CD8-positive, alpha-beta T cell (primary cell): ENCODE measurements at regions of chr7 and their contacts with region 1.

Region 1: DNA sequence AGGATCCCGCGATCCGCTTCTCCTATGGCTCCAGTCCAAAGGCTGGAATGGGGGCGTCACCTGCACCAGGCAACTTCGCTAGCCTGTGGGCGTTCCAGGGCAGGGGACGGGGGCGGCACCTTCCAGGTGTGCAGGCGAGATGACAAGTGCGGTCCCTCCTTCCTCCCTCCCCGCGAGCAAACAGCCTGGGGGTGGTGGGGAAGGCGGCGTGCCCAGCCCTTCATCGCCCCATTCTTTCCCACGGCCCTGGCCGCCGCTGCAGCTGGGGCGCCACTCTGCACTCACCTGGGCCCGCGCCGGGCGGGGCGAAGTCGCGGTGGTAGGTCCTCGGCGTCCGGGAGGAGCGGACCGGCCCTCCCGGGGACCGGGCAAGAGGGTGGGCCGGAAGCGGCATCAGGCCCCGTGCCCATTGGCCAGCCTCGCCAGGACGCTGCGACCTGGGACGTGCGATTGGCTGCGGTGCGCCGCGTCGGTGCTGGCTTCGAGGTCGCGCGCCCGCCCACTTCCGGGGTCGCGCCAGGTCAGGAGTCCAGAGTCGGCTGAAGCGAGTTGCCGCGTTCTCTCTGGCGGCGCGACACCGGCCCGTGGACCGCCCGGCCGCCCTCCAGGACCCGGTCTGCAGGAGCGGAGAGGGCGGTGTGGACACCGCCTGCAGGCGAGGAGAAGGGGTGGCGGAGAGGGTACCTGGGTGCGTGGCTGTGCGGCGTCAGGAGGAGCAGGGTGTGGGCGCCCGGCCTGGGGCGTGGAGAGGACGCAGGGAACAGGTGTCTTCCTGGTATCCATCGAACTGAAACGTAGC is at the start of gene TECPR1:
- DNase-seq: peak; percentile 66 to 94 (median 87)
- ATAC-seq: peak; percentile 68
- H3K4me3 ChIP-seq: peak within 1 kb of the TSS; percentile 78 to 86
- H3K4me3 Mint-ChIP-seq: peak within 1 kb of the TSS; percentile 94
- H3K27ac ChIP-seq: peak within 1 kb of the TSS; percentile 84 to 87
- H3K27ac Mint-ChIP-seq: peak within 1 kb of the TSS; percentile 99
- H3K4me1 ChIP-seq: peaks cover 47% of the 10 kb centered on the region
- H3K4me1 Mint-ChIP-seq: peaks cover 54% of the 10 kb centered on the region
- H3K27me3 ChIP-seq: no peaks in the 10 kb centered on the region
- H3K27me3 Mint-ChIP-seq: no peaks in the 10 kb centered on the region
- CTCF ChIP-seq: peak; percentile 22
- total RNA-seq, gene TECPR1: 64.4 to 68.2 TPM

Region 2: GRCh38 chr7:97381815-97382554 is 870.1 kb before region 1 on chr7:
- CTCF ChIA-PET with region 1: no interaction called
- POLR2A ChIA-PET with region 1: no interaction called
- intact Hi-C with region 1: no loop called
- DNase-seq: no peak
- ATAC-seq: no peak
- H3K4me3 ChIP-seq: no peak overlapping the region
- H3K4me3 Mint-ChIP-seq: no peak overlapping the region
- H3K27ac ChIP-seq: no peak overlapping the region
- H3K27ac Mint-ChIP-seq: no peak overlapping the region
- H3K4me1 ChIP-seq: no peaks in the 10 kb centered on the region
- H3K4me1 Mint-ChIP-seq: no peaks in the 10 kb centered on the region
- H3K27me3 ChIP-seq: no peaks in the 10 kb centered on the region
- H3K27me3 Mint-ChIP-seq: no peaks in the 10 kb centered on the region
- CTCF ChIP-seq: no peak

Region 3: DNA sequence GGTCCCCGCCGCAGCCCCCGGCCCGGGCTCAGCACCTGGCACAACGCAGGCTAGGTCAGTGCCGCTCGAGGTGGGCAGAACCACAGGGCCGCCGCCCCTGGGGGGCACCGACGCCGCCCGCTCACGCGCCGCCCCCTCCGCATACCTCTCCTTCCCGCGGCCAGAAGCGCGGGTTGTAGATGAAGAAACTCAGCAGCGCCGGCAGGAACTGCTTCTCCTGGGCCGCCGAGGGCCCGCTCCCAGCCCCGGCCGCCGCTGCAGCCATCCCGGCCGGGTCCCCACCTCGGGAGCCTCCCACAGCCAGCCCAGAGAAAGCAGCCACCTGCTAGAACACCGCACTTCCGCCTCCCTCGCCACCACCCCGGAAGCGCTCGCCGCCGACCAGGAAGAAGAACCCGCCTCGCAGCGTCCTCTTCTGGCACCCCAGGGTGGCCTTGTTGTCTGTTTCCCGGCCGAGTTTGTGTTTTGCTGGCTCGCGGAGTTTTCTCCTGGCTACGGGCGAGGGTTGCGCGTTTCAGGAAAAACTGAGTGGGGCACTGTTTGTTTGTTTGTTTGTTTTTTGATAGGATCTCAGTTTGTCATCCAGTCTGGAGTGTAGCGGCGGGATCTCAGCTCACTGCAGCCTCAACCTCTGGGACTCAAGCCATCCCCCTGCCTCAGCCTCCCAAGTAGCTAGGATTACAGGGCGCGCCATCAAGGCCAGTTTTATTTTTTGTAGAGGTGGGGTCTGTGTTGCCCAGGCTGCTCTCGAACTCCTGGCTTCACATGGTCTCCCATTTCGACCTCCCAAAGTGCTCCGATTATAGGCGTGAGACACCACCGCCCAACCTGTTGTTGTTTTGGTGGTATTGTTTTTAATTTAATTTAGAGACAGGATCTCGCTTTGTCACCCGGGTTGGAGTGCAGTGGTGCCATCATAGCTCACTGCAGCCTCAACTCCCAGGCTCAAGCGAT is 279.8 kb before region 1 on chr7:
- CTCF ChIA-PET with region 1: no interaction called
- POLR2A ChIA-PET with region 1: no interaction called
- intact Hi-C with region 1: loop called in 1 of 2 experiments (anchors 10 kb)
- DNase-seq: peak; percentile 65 to 90 (median 84)
- ATAC-seq: peak; percentile 94
- H3K4me3 ChIP-seq: peak overlapping the region; percentile 81 to 84
- H3K4me3 Mint-ChIP-seq: peak overlapping the region; percentile 89
- H3K27ac ChIP-seq: peak overlapping the region; percentile 61 to 72
- H3K27ac Mint-ChIP-seq: peak overlapping the region; percentile 93
- H3K4me1 ChIP-seq: peaks cover 10% of the 10 kb centered on the region
- H3K4me1 Mint-ChIP-seq: peaks cover 22% of the 10 kb centered on the region
- H3K27me3 ChIP-seq: no peaks in the 10 kb centered on the region
- H3K27me3 Mint-ChIP-seq: no peaks in the 10 kb centered on the region
- CTCF ChIP-seq: peak; percentile 32

Region 4: DNA sequence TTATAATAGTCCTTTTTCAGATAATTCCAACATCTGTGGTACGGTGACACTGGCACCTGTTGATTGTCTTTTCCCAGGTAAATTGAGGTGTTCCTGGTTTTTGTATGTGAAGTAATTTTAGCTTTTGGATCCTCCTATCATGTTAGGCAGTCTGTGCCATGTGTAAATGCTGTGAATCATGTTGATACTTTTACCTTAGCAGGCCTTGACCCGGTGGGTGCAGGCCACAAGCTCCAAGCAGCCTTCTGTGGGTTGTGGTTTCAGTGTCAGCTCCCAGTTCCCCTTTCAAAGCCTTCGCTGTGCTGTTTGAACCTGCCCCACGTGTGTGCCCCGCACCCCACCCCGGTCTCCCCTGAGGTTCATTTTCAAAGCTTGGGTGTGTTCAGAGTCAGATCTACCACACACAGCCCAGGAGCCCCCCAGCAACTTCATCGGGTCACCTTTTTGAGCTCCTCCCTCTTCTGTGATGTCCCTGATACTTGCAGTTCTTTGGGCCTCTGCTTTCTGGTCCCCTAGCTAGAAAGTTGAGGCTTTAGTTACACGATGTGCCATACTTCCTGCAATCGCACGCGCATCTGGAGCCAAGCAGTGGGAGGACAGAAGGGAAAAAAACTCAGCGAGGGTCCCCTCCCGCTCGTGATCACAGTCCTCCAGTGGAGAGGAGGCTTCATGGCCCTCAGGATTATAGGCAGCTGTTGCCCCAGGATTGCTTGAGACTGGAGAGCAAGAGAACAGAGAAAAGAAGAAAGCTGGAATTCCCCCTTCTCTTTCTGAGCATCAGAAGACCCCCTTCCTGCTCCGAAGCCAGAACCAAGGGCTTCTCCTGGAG is 49.5 kb before region 1 on chr7:
- CTCF ChIA-PET with region 1: no interaction called
- POLR2A ChIA-PET with region 1: interaction called, 23 read pairs
- intact Hi-C with region 1: loop called in 1 of 2 experiments (anchors 2 kb)
- DNase-seq: peak; percentile 44 to 86 (median 73)
- ATAC-seq: peak; percentile 85
- H3K4me3 ChIP-seq: peak overlapping the region; percentile 30 to 43
- H3K4me3 Mint-ChIP-seq: peak overlapping the region; percentile 85
- H3K27ac ChIP-seq: peak overlapping the region; percentile 50
- H3K27ac Mint-ChIP-seq: peak overlapping the region; percentile 93
- H3K4me1 ChIP-seq: peaks cover 58% of the 10 kb centered on the region
- H3K4me1 Mint-ChIP-seq: peaks cover 60% of the 10 kb centered on the region
- H3K27me3 ChIP-seq: no peaks in the 10 kb centered on the region
- H3K27me3 Mint-ChIP-seq: no peaks in the 10 kb centered on the region
- CTCF ChIP-seq: no peak

Region 5: GRCh38 chr7:98314469-98314868 is 62.4 kb after region 1 on chr7:
- CTCF ChIA-PET with region 1: no interaction called
- POLR2A ChIA-PET with region 1: no interaction called
- intact Hi-C with region 1: no loop called
- DNase-seq: peak in 1 of 9 experiments; percentile 19
- ATAC-seq: no peak
- H3K4me3 ChIP-seq: no peak overlapping the region
- H3K4me3 Mint-ChIP-seq: no peak overlapping the region
- H3K27ac ChIP-seq: no peak overlapping the region
- H3K27ac Mint-ChIP-seq: no peak overlapping the region
- H3K4me1 ChIP-seq: no peaks in the 10 kb centered on the region
- H3K4me1 Mint-ChIP-seq: no peaks in the 10 kb centered on the region
- H3K27me3 ChIP-seq: no peaks in the 10 kb centered on the region
- H3K27me3 Mint-ChIP-seq: peaks cover 4% of the 10 kb centered on the region
- CTCF ChIP-seq: no peak

Region 6: DNA sequence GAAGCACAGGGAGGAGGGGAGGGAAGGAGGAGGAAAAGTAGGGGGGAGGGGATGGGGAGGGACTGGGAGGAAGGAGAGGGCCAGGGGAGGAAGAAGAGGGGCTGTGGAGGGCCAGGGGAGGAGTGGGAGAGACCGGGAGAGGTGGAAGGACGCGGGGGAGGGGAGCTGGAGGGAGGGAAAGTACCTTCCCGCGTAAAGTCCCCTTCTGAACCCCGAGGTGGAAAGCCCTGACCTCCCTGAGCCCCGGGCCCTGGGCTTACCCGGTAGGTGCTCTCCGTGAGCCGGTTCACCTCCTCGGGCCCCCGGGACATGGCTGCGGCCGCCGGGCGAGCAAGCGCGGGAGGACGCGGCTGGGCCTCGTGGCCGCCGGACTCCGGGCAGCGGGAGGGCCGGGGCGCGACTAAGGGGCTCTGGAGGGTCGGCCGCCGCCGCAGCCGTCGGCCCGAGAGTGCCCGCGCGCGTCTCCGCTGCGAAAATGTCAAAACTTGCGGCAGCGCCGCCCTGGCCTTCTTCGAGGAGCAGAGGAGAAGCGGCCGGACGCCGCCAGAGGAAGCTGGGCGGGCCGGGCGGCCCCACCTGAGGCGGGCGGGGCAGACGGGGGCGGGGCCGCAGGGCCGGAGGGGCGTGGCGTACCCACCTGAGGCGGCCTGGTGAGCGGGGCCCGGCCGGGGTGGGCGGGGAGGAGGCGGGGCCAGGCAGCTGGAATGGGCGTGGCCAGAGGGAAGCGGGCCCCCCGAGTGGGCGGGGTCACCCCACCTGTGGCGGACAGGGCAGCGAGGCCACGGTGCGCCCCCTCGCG is 148.7 kb after region 1 on chr7 and contains the start of gene BAIAP2L1:
- CTCF ChIA-PET with region 1: no interaction called
- POLR2A ChIA-PET with region 1: interaction called, 3 read pairs
- intact Hi-C with region 1: loop called in 1 of 2 experiments (anchors 1 kb)
- DNase-seq: peak; percentile 65 to 88 (median 77)
- ATAC-seq: peak; percentile 89
- H3K4me3 ChIP-seq: peak within 1 kb of the TSS in 1 of 2 experiments; percentile 47
- H3K4me3 Mint-ChIP-seq: peak within 1 kb of the TSS; percentile 66
- H3K27ac ChIP-seq: no peak within 1 kb of the TSS
- H3K27ac Mint-ChIP-seq: no peak within 1 kb of the TSS
- H3K4me1 ChIP-seq: peaks cover 8% of the 10 kb centered on the region
- H3K4me1 Mint-ChIP-seq: peaks cover 9% of the 10 kb centered on the region
- H3K27me3 ChIP-seq: peaks cover 0 to 8% of the 10 kb centered on the region in 2 experiments
- H3K27me3 Mint-ChIP-seq: peaks cover 24% of the 10 kb centered on the region
- CTCF ChIP-seq: peak; percentile 38
- total RNA-seq, gene BAIAP2L1: 0.43 TPM in 1 of 2 experiments, not detected in the other

Region 7: DNA sequence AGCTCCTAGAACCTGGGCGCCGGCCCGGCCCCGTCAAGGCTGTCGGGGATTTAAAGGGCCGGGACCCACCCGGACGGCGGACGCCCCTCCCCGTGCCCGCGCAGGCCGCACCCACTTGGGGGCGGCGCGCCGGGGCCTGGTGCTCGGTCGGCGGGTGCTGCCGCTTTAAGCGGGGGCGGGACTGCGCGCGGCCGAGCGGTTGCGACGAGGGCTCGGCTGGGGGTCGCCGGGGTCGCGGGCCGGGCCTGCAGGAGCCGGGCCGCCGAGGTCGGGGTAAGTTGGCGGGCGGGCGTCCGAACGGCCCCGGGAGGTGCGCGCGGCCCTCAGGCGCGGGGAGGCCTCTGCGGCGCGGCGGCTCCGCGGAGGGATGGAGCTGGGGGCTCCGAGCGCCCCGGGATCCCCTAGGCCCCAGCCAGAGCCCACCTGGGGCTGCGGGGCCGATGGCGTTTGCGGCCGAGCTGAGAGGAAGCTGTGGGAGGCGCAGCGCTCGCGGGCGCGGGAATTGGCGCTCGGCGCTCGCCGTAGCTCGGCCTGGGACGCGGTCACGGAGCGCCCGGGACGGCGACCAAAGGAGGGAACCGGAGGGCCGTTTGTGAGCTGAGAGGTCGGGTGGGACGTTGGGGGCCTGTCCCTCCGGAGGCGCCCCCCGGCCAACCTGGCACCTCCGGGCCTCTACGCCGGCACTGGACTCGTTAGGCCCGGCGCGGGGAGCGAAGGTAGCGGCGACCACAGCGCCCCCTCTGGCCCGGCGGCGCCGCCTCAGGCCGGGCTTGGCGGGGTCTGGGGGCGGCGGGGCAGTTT is 626.5 kb after region 1 on chr7 and contains the start of gene TRRAP:
- CTCF ChIA-PET with region 1: no interaction called
- POLR2A ChIA-PET with region 1: interaction called, 3 read pairs
- intact Hi-C with region 1: loop called (anchors 10 kb)
- DNase-seq: peak; percentile 56 to 87 (median 73)
- ATAC-seq: peak; percentile 63
- H3K4me3 ChIP-seq: peak within 1 kb of the TSS; percentile 82 to 92
- H3K4me3 Mint-ChIP-seq: peak within 1 kb of the TSS; percentile 98
- H3K27ac ChIP-seq: peak within 1 kb of the TSS; percentile 77 to 82
- H3K27ac Mint-ChIP-seq: peak within 1 kb of the TSS; percentile 96
- H3K4me1 ChIP-seq: peaks cover 16% of the 10 kb centered on the region
- H3K4me1 Mint-ChIP-seq: peaks cover 24% of the 10 kb centered on the region
- H3K27me3 ChIP-seq: no peaks in the 10 kb centered on the region
- H3K27me3 Mint-ChIP-seq: peaks cover 2% of the 10 kb centered on the region
- CTCF ChIP-seq: peak; percentile 94
- total RNA-seq, gene TRRAP: 39.8 to 43.0 TPM